Tibial artery (tissue), 4 donors: ENCODE measurements at regions of chr10 and their contacts with region 1.

Region 1: GRCh38 chr10:98045785-98046389 is 15.5 kb upstream of the CRTAC1 start:
- DNase-seq: no peak
- H3K4me3 ChIP-seq: no peak overlapping the region
- H3K27ac ChIP-seq: no peak overlapping the region
- H3K4me1 ChIP-seq: no peaks in the 10 kb centered on the region
- H3K27me3 ChIP-seq: peaks cover 0 to 41% of the 10 kb centered on the region in 2 donors
- CTCF ChIP-seq: peak; percentile 70 to 84

Region 2: DNA sequence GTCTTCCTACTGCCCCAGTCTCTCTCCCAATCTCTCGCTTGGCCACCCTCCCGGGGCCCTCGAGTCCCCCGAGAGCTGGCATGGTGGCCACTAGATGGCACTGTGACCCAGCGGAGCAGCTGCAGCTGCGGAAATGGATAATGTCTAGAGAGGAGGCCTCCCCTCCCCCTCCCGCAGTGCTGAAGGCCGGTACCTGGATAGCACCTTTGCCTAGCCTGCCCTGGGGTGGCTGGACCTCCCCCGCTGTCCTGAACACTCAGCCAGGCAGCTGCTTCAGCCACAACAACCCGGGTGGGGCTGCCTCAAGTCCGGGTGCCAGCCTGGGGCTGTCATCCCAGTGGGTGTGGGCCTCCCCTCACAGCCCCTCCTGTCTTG is 131.1 kb before region 1 on chr10:
- intact Hi-C with region 1: loop called (anchors 5 kb)
- DNase-seq: peak; percentile 64 to 82
- H3K4me3 ChIP-seq: no peak overlapping the region
- H3K27ac ChIP-seq: no peak overlapping the region
- H3K4me1 ChIP-seq: peaks cover 0 to 22% (median 10%) of the 10 kb centered on the region in 4 donors
- H3K27me3 ChIP-seq: peaks cover 0 to 27% of the 10 kb centered on the region in 2 donors
- CTCF ChIP-seq: peak; percentile 77 to 90